PC-3 (cell line): ENCODE measurements at regions of chr12 and their contacts with region 1.

Region 1: GRCh38 chr12:113241191-113242025 is 20.1 kb downstream of the TPCN1 start:
- DNase-seq: peak; percentile 97
- ATAC-seq: peak; percentile 61
- H3K4me3 ChIP-seq: peak overlapping the region; percentile 37; the same call in 1 of the 2 replicates
- H3K27ac ChIP-seq: peak overlapping the region; percentile 96
- H3K4me1 ChIP-seq: peaks cover 64% of the 10 kb centered on the region
- H3K27me3 ChIP-seq: no peaks in the 10 kb centered on the region
- CTCF ChIP-seq: no peak

Region 2: DNA sequence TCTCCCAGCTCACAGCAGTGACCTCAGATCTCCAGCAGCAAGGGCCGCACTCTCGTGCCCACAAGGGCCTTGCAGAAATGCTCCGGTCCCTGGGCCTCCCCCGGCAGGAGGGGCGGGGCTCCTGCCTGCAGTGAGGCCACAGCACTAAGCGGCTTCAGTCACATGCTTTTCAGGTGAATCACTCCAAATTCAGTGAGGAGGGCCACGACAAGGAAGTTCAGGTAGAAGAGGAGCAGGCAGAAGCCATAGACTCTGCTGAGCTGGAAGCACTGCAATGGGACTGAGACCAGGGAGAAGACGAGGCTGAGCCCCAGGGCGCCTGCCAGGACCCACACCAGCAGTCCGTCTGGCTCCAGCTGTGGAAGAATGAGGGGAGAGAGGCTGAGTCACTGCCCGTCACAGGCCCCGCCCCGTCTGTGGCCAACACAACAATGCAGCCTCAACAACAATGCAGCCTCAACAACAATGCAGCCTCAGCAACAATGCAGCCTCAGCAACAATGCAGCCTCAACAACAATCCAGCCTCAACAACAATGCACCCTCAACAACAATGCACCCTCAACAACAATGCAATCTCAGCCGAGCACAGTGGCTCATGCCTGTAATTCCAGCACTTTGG is 58.3 kb after region 1 on chr12:
- CTCF ChIA-PET with region 1: no interaction called
- POLR2A ChIA-PET with region 1: no interaction called
- intact Hi-C with region 1: loop called (anchors 1 kb)
- DNase-seq: peak; percentile 94
- ATAC-seq: peak; percentile 91
- H3K4me3 ChIP-seq: peak overlapping the region; percentile 10; the same call in 1 of the 2 replicates
- H3K27ac ChIP-seq: peak overlapping the region; percentile 83
- H3K4me1 ChIP-seq: peaks cover 17% of the 10 kb centered on the region
- H3K27me3 ChIP-seq: no peaks in the 10 kb centered on the region
- CTCF ChIP-seq: no peak